PC-9 (cell line): ENCODE measurements at regions of chr1 and their contacts with region 1.

Region 1: GRCh38 chr1:210394281-210394821 is 65.6 kb downstream of the HHAT start:
- DNase-seq: no peak
- H3K4me3 ChIP-seq: no peak overlapping the region
- H3K27ac ChIP-seq: peak overlapping the region; percentile 57
- H3K4me1 ChIP-seq: peaks cover 18% of the 10 kb centered on the region
- H3K27me3 ChIP-seq: no peaks in the 10 kb centered on the region
- CTCF ChIP-seq: no peak

Region 2: DNA sequence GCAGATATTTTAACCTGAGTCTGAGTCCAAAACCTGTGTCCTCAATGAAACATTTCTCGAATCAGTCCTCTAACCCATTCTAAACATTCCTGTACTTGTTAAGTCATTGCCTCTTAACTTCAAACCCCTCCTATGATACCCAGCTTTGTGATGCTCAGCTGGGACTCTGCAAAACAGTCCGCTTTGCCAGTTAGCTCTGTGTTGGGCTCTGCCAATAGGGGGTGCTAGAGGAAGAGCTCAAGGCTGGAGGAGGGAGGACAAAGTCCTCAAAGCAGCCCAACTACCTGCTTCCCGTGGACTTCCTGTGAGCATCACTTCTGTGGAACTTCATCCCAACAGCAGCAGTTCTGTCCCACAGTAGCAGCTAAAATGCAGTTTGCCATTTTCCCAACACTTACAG is 494.4 kb before region 1 on chr1:
- CTCF ChIA-PET with region 1: no interaction called
- POLR2A ChIA-PET with region 1: no interaction called
- intact Hi-C with region 1: no loop called
- DNase-seq: no peak
- H3K4me3 ChIP-seq: no peak overlapping the region
- H3K27ac ChIP-seq: peak overlapping the region; percentile 84
- H3K4me1 ChIP-seq: peaks cover 44% of the 10 kb centered on the region
- H3K27me3 ChIP-seq: no peaks in the 10 kb centered on the region
- CTCF ChIP-seq: peak; percentile 48; the same call in 1 of the 2 replicates

Region 3: DNA sequence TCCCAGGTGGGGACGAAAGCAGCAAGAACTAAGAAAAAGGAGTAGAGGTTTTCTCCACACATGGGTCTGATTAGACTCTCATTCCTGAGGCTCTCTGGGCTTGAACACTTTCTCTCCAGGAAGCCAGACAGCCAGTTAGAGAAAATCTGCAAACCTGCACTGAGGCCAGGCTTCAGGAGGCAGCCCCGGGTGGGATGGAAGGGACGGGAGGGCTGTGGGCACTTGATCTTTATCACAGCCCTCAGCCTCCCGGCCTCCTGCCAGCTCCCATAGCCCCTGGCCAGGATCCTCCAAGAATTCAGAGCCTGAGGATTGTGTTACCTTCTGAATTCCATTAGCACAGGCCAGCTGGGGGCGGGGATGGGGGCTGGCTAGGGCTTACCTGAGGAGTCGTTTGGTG is 121.7 kb before region 1 on chr1:
- CTCF ChIA-PET with region 1: no interaction called
- POLR2A ChIA-PET with region 1: no interaction called
- intact Hi-C with region 1: no loop called
- DNase-seq: peak in 1 of 2 experiments; percentile 63
- H3K4me3 ChIP-seq: no peak overlapping the region
- H3K27ac ChIP-seq: no peak overlapping the region
- H3K4me1 ChIP-seq: no peaks in the 10 kb centered on the region
- H3K27me3 ChIP-seq: no peaks in the 10 kb centered on the region
- CTCF ChIP-seq: no peak

Region 4: DNA sequence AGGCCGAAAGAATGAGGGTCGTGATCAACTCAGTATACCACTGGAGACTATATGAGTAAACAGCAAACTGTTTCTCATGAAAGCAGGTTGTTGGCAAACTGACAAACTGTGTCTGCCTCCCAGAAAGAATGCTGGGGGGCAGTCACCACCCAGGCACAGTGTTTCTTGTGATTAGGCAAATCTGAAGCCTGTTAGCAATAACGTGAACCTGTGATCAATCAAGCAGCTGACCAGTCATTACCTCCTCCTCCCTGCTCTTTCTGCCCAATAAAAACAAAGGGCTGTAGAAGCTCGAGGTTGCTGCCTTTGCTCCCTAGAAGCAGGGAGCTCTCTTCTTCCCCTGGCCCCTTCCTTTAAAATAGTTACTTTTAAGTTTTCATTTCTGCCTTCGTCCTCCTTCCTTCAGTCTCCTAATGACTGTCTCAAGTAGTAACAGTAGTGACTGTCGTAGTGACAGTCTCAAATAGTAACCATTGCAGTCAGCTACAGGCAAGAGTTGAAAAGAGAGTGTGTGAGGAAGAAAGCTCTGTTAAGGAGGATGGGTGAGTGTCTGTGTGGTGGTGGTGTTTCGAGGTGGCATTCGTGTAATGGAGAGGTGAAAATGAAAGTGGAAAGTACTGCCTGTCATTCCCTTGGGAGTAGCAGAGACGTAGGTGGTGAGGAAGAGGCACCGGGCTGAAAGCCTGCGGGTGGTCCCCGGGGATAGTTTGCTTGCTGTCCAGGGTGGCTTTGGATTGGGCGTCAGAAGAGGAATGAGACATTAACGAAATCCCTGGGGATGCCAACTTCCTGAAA is 51.2 kb before region 1 on chr1:
- CTCF ChIA-PET with region 1: no interaction called
- POLR2A ChIA-PET with region 1: no interaction called
- intact Hi-C with region 1: no loop called
- DNase-seq: no peak
- H3K4me3 ChIP-seq: no peak overlapping the region
- H3K27ac ChIP-seq: no peak overlapping the region
- H3K4me1 ChIP-seq: no peaks in the 10 kb centered on the region
- H3K27me3 ChIP-seq: no peaks in the 10 kb centered on the region
- CTCF ChIP-seq: no peak

Region 5: GRCh38 chr1:210360852-210361477 is 33.4 kb before region 1 on chr1:
- CTCF ChIA-PET with region 1: interaction called, 5 read pairs
- POLR2A ChIA-PET with region 1: no interaction called
- intact Hi-C with region 1: loop called (anchors 1 kb)
- DNase-seq: no peak
- H3K4me3 ChIP-seq: no peak overlapping the region
- H3K27ac ChIP-seq: no peak overlapping the region
- H3K4me1 ChIP-seq: peaks cover under 1% of the 10 kb centered on the region; the same call in 1 of the 2 replicates
- H3K27me3 ChIP-seq: no peaks in the 10 kb centered on the region
- CTCF ChIP-seq: peak; percentile 72

Region 6: DNA sequence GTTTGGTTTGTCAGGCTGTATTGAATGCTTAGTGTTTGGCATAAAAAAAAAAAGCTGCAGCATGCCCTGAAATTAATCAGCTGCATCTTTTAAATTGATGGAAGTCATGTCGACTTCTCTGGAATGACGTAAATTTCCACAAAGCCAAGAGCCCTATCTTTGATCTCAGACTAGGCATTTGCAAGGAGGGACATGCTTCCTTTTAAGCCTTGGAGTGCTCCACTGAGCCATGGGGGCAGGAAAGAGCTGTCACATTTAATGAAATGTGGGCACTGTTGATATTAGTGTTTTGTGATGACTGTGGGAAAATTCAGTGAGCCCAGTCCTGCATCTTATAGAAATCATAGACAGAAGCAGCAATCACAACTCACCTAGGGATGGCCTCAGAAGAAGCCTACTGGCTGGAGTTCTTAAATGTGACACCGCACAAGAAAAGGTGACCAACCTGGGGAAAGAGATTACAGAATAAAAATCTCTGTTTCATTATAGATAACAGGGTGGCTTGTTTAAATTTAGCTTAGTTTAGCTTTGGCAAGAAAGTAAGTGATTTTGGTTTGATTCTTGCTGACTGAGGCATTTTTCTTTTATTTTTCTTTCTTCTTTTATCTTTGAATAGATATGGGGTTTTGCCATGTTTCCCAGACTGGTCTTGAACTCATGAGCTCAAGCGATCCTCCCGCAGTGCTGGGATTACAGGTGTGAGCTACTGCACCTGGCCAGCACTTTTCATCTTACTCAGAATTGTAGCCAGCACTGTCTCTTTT is 122.5 kb after region 1 on chr1:
- CTCF ChIA-PET with region 1: no interaction called
- POLR2A ChIA-PET with region 1: no interaction called
- intact Hi-C with region 1: no loop called
- DNase-seq: no peak
- H3K4me3 ChIP-seq: no peak overlapping the region
- H3K27ac ChIP-seq: no peak overlapping the region
- H3K4me1 ChIP-seq: no peaks in the 10 kb centered on the region
- H3K27me3 ChIP-seq: no peaks in the 10 kb centered on the region
- CTCF ChIP-seq: no peak